WTC11 (cell line): ENCODE measurements at regions of chr10 and their contacts with region 1.

Region 1: DNA sequence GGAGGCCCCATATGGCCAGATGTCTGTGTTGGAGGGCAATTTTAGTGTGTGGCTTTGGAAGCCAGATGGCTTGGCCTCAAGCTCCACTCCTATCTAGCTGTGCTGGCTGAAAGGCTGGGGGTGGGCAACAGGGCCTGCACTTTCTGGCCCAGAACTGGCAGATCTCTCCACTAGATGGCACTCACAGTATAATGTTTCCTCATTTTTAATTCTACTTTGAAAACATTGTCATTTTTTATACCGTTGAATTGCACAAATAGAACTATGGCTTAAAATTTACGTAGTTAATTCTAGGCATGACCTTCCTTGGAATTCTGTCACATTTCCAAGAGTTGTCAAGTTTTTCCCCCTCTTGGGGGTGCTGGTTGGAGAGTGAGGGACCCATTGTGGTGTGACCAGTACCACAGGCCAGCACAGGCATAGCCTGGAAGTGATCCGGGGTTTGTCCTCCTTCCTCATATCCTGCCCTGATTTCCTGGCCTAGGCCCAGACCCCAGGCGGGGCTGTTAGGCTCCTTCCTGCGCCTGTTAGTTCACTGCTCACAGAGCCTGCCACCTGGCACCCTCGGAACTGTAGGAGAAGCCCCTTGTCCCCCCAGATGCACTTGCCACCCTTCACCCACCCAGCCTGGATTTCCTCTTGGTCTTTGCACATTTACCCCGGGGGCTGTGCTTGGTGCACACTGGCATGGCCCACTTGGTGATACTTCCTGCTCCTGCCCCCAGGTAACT is 52.8 kb downstream of the ARHGAP22 start:
- DNase-seq: peak; percentile 43
- ATAC-seq: peak; percentile 76
- H3K4me3 Mint-ChIP-seq: no peak overlapping the region
- H3K27ac Mint-ChIP-seq: no peak overlapping the region
- H3K4me1 Mint-ChIP-seq: peaks cover 2% of the 10 kb centered on the region; the same call in 1 of the 2 replicates
- H3K27me3 Mint-ChIP-seq: no peaks in the 10 kb centered on the region
- CTCF ChIP-seq: no peak

Region 2: GRCh38 chr10:48533951-48534720 is 17.9 kb before region 1 on chr10:
- CTCF ChIA-PET with region 1: interaction called, 44 read pairs
- POLR2A ChIA-PET with region 1: no interaction called
- DNase-seq: peak; percentile 46
- ATAC-seq: peak; percentile 38
- H3K4me3 Mint-ChIP-seq: no peak overlapping the region
- H3K27ac Mint-ChIP-seq: peak overlapping the region; percentile 80
- H3K4me1 Mint-ChIP-seq: peaks cover 54% of the 10 kb centered on the region
- H3K27me3 Mint-ChIP-seq: no peaks in the 10 kb centered on the region; the same call in 1 of the 2 replicates
- CTCF ChIP-seq: no peak

Region 3: DNA sequence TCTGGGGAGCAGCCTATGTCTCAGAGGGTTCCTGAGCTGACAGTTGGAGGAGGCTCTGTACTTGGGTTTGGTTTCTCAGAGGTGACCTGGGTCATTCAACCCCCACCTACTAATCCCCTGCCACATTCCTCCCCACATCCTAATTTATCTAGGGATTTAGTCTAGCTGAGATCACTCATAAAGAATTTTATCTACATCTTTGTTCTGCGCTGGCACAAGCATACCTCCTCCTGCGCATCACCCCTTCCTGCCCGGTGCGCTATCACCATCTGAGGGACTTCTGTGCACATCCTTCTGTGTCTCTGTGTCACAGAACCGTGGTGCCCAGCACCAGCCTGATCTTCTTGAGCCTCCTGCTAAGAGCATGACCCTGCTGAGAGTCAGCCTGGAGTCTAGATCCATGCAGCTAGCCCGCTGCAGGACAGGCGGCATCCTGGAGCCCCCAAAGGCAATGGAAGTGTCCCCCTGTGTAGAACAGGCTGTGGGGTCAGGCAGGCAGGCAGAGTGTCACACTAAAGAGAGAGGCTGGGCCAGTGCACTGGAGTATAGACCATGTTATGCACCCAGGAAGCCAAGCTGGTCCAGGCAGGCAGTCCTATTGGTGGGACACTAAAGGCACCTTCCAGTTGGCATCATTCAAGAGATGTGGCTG is 10.8 kb before region 1 on chr10:
- CTCF ChIA-PET with region 1: interaction called, 44 read pairs
- POLR2A ChIA-PET with region 1: no interaction called
- DNase-seq: no peak
- ATAC-seq: no peak
- H3K4me3 Mint-ChIP-seq: no peak overlapping the region
- H3K27ac Mint-ChIP-seq: no peak overlapping the region
- H3K4me1 Mint-ChIP-seq: peaks cover 60% of the 10 kb centered on the region
- H3K27me3 Mint-ChIP-seq: no peaks in the 10 kb centered on the region
- CTCF ChIP-seq: no peak